ENCODE measurements at regions of chr14 and their contacts with region 1.

Region 1: GRCh38 chr14:92603309-92604242 is 90.0 kb downstream of the RIN3 start:
- DNase-seq: peak; percentile 36 to 90
- H3K4me3 ChIP-seq: peak overlapping the region in 1 of 2 donors; percentile 12
- H3K27ac ChIP-seq: peak overlapping the region; percentile 91 to 92
- H3K4me1 ChIP-seq: peaks cover 18 to 25% of the 10 kb centered on the region in 2 donors
- H3K27me3 ChIP-seq: no peaks in the 10 kb centered on the region
- CTCF ChIP-seq: peak; percentile 46 to 66 (median 51)

Region 2: GRCh38 chr14:92121670-92122350 is 481.8 kb before region 1 on chr14 and contains the starts of genes CPSF2 and NDUFB1:
- intact Hi-C with region 1: loop called (anchors 10 kb)
- DNase-seq: peak in 1 of 2 donors; percentile 86
- H3K4me3 ChIP-seq: peak within 1 kb of the TSS; percentile 77 to 90
- H3K27ac ChIP-seq: peak within 1 kb of the TSS; percentile 89 to 94
- H3K4me1 ChIP-seq: peaks cover 0 to 12% of the 10 kb centered on the region in 2 donors
- H3K27me3 ChIP-seq: no peaks in the 10 kb centered on the region
- CTCF ChIP-seq: peak in 1 of 3 experiments; percentile 26
- total RNA-seq, gene CPSF2: 8.0 TPM
- total RNA-seq, gene NDUFB1: 867 TPM

Region 3: DNA sequence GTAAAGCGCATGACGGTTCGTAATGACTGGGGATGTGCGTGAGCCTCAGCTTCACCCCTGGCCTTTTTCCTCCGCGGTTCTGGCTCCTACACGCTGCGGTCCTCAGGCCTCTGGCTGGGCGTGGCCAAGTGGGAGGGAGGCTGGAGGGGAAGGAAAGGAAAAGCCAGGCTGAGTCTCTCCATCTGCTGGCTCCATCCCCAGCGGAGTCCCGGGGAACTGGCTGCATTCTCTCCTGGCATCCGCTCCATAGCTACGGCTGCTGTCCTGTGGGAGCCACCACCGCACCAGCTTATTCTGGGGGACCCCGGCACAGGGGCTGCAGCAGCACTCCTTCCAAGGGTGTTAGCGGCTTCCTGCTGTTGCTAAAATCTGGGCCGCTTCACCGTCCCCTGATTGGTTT is 348.8 kb before region 1 on chr14:
- intact Hi-C with region 1: no loop called
- DNase-seq: peak in 1 of 2 donors; percentile 69
- H3K4me3 ChIP-seq: peak overlapping the region; percentile 33 to 42
- H3K27ac ChIP-seq: no peak overlapping the region
- H3K4me1 ChIP-seq: no peaks in the 10 kb centered on the region
- H3K27me3 ChIP-seq: no peaks in the 10 kb centered on the region
- CTCF ChIP-seq: no peak

Region 4: DNA sequence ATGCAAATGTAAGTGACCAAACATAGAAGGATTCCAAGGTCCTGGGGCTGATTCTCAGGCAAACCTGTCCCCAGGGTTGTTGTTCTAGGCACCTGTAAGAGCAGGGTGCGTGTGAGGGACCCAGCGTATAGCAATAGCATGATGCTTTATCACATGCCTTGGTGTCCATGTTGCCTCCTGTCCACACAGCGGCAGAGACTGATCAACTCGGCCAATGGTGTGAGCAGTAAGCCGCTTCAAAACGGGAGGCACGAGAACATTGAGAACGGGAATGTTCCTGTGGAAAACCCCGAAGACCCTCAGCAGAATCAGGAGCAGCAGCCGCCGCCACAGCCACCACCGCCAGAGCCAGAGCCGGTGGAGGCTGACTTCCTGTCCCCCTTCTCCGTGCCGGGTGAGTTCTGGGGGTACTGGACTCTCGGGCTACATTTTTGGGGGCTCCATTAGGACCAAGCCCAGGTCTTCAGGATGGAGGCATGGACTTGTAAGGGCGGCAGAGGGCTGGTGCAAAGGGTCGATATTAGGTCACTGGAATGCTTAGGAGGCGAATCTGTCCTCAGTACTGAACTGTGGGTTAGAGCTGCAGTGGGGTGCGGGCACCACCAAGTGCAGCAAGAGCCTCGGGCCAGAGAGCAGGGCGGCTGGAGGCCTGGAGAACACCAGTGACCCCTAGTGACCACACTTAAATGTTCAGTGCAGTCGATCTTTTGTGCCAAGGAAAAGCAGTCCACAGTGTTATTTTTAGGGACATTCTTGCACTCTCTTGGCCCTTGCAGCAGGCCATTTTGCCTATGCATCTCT is 147.2 kb before region 1 on chr14:
- intact Hi-C with region 1: loop called (anchors 1 kb)
- DNase-seq: peak in 1 of 2 donors; percentile 77
- H3K4me3 ChIP-seq: no peak overlapping the region
- H3K27ac ChIP-seq: no peak overlapping the region
- H3K4me1 ChIP-seq: peaks cover 2 to 10% of the 10 kb centered on the region in 2 donors
- H3K27me3 ChIP-seq: no peaks in the 10 kb centered on the region
- CTCF ChIP-seq: peak; percentile 72 to 84 (median 79)

Region 5: GRCh38 chr14:92585981-92586937 is 17.3 kb before region 1 on chr14:
- intact Hi-C with region 1: loop called (anchors 1 kb)
- DNase-seq: peak in 1 of 2 donors; percentile 92
- H3K4me3 ChIP-seq: no peak overlapping the region
- H3K27ac ChIP-seq: peak overlapping the region; percentile 91 to 95
- H3K4me1 ChIP-seq: peaks cover 13 to 51% of the 10 kb centered on the region in 2 donors
- H3K27me3 ChIP-seq: no peaks in the 10 kb centered on the region
- CTCF ChIP-seq: no peak

Region 6: DNA sequence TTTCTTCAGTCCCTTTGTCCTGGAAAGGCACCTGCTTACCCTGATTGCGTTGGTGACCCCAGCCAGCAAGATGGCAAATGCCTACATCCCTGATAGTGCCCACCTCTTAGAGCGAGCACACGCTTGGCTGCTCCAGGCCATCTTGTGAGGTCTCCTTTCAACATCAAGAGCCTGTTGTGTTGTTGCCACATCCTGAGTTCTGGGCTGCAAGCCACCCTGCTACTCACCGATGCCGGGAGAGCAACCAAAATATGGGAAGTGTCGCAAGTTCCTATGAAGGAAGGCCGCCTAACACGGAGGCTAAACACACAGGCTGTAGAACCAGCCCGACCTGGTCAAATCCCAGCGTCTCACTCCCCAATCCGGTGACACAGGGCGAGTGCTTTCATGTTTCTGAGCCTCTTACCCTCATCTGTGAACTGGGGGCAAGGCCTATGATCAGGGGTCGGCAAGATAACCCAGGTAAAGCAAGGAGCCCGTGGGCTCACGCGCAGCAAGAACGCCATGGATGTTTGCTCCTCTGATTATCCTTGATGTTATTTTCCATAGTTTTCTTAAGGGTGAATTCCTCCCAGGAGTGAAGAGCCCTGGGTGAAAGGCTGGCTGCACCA is 46.5 kb after region 1 on chr14:
- intact Hi-C with region 1: loop called (anchors 2 kb)
- DNase-seq: peak; percentile 65 to 91
- H3K4me3 ChIP-seq: no peak overlapping the region
- H3K27ac ChIP-seq: peak overlapping the region; percentile 97
- H3K4me1 ChIP-seq: peaks cover 28 to 44% of the 10 kb centered on the region in 2 donors
- H3K27me3 ChIP-seq: no peaks in the 10 kb centered on the region
- CTCF ChIP-seq: no peak

Region 7: GRCh38 chr14:92680781-92681650 is 77.4 kb after region 1 on chr14:
- intact Hi-C with region 1: loop called (anchors 5 kb)
- DNase-seq: peak; percentile 50 to 86
- H3K4me3 ChIP-seq: no peak overlapping the region
- H3K27ac ChIP-seq: peak overlapping the region in 1 of 2 donors; percentile 65
- H3K4me1 ChIP-seq: no peaks in the 10 kb centered on the region
- H3K27me3 ChIP-seq: no peaks in the 10 kb centered on the region
- CTCF ChIP-seq: peak; percentile 87 to 98 (median 94)

Region 8: DNA sequence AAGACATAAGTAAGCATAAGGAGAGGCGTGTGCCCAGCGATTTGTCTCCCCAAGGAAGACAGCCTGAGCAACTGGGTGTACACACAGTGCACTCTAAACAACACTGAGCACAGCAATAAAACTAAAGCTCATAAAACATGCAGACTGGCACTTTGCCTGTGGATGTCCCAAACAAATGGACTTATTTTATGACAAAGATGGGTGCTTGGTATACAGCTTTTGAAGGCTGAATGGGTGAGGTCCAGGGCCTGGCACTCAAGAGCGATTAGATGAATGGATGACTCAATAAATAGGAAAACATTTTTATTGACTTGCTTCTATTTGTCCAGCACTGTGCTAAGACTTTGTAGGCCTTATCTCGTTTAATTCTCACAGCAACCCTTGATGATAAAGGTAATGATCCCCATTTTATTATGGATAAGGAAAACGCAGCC is 116.3 kb after region 1 on chr14:
- intact Hi-C with region 1: no loop called
- DNase-seq: no peak
- H3K4me3 ChIP-seq: no peak overlapping the region
- H3K27ac ChIP-seq: peak overlapping the region; percentile 38 to 57
- H3K4me1 ChIP-seq: peaks cover 9 to 14% of the 10 kb centered on the region in 2 donors
- H3K27me3 ChIP-seq: no peaks in the 10 kb centered on the region
- CTCF ChIP-seq: no peak

Measured in ascending aorta (tissue), 2 donors.